ENCODE measurements at regions of chr7 and their contacts with region 1.

Region 1: DNA sequence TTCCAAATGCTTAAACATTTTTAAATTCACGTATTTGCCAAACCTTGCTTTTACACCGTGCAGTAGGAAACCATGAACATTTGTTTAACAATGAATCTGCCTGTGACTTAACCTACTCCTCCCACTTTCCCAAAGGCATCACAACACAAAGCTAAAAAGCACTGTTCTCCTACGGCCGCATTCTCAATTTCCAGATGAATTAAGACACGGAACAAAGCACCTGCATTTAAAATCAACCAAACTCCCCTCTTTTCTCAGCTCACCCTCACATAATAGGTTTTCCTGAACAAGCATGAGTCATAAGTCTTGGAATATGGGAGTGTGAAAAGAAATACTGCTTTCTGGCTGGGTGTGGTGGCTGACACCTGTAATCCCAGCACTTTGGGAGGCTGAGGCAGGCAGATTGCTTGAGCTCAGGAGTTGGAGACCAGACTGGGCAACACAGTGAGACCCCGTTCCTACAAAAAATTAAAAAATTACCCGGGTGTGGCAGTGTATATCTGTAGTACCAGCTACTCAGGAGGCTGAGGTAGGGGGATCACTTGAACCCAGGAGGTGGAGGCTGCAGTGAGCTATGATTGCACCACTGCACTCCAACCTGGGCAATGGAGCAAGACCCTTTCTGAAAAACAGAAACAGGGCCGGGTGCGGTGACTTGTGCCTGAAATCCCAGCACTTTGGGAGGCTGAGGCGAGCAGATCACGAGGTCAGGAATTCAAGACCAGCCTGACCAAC is 51.7 kb upstream of the CYTH3 start:
- DNase-seq: no peak
- ATAC-seq: no peak
- H3K4me3 ChIP-seq: no peak overlapping the region
- H3K4me3 Mint-ChIP-seq: no peak overlapping the region
- H3K27ac ChIP-seq: no peak overlapping the region
- H3K27ac Mint-ChIP-seq: no peak overlapping the region
- H3K4me1 ChIP-seq: no peaks in the 10 kb centered on the region
- H3K4me1 Mint-ChIP-seq: peaks cover 4% of the 10 kb centered on the region
- H3K27me3 ChIP-seq: no peaks in the 10 kb centered on the region
- H3K27me3 Mint-ChIP-seq: peaks cover 3% of the 10 kb centered on the region
- CTCF ChIP-seq: no peak

Region 2: GRCh38 chr7:5854738-5855137 is 469.4 kb before region 1 on chr7:
- CTCF ChIA-PET with region 1: interaction called, 3 read pairs
- POLR2A ChIA-PET with region 1: no interaction called
- intact Hi-C with region 1: loop called (anchors 1 to 2 kb)
- DNase-seq: no peak
- ATAC-seq: no peak
- H3K4me3 ChIP-seq: no peak overlapping the region
- H3K4me3 Mint-ChIP-seq: no peak overlapping the region
- H3K27ac ChIP-seq: no peak overlapping the region
- H3K27ac Mint-ChIP-seq: no peak overlapping the region
- H3K4me1 ChIP-seq: peaks cover 16% of the 10 kb centered on the region
- H3K4me1 Mint-ChIP-seq: peaks cover 18% of the 10 kb centered on the region
- H3K27me3 ChIP-seq: no peaks in the 10 kb centered on the region
- H3K27me3 Mint-ChIP-seq: no peaks in the 10 kb centered on the region
- CTCF ChIP-seq: no peak

Region 3: GRCh38 chr7:5997222-5997808 is 326.8 kb before region 1 on chr7:
- CTCF ChIA-PET with region 1: interaction called, 54 read pairs
- POLR2A ChIA-PET with region 1: interaction called, 4 read pairs
- intact Hi-C with region 1: loop called (anchors 1 kb)
- DNase-seq: peak; percentile 17 to 80 (median 54)
- ATAC-seq: peak; percentile 76
- H3K4me3 ChIP-seq: no peak overlapping the region
- H3K4me3 Mint-ChIP-seq: no peak overlapping the region
- H3K27ac ChIP-seq: no peak overlapping the region
- H3K27ac Mint-ChIP-seq: no peak overlapping the region
- H3K4me1 ChIP-seq: no peaks in the 10 kb centered on the region
- H3K4me1 Mint-ChIP-seq: no peaks in the 10 kb centered on the region
- H3K27me3 ChIP-seq: no peaks in the 10 kb centered on the region
- H3K27me3 Mint-ChIP-seq: no peaks in the 10 kb centered on the region
- CTCF ChIP-seq: peak; percentile 73

Region 4: GRCh38 chr7:6160191-6160623 is 163.9 kb before region 1 on chr7:
- CTCF ChIA-PET with region 1: interaction called, 8 read pairs
- POLR2A ChIA-PET with region 1: no interaction called
- intact Hi-C with region 1: loop called (anchors 2 to 5 kb)
- DNase-seq: no peak
- ATAC-seq: no peak
- H3K4me3 ChIP-seq: no peak overlapping the region
- H3K4me3 Mint-ChIP-seq: no peak overlapping the region
- H3K27ac ChIP-seq: no peak overlapping the region
- H3K27ac Mint-ChIP-seq: no peak overlapping the region
- H3K4me1 ChIP-seq: no peaks in the 10 kb centered on the region
- H3K4me1 Mint-ChIP-seq: no peaks in the 10 kb centered on the region
- H3K27me3 ChIP-seq: no peaks in the 10 kb centered on the region
- H3K27me3 Mint-ChIP-seq: no peaks in the 10 kb centered on the region
- CTCF ChIP-seq: no peak

Region 5: DNA sequence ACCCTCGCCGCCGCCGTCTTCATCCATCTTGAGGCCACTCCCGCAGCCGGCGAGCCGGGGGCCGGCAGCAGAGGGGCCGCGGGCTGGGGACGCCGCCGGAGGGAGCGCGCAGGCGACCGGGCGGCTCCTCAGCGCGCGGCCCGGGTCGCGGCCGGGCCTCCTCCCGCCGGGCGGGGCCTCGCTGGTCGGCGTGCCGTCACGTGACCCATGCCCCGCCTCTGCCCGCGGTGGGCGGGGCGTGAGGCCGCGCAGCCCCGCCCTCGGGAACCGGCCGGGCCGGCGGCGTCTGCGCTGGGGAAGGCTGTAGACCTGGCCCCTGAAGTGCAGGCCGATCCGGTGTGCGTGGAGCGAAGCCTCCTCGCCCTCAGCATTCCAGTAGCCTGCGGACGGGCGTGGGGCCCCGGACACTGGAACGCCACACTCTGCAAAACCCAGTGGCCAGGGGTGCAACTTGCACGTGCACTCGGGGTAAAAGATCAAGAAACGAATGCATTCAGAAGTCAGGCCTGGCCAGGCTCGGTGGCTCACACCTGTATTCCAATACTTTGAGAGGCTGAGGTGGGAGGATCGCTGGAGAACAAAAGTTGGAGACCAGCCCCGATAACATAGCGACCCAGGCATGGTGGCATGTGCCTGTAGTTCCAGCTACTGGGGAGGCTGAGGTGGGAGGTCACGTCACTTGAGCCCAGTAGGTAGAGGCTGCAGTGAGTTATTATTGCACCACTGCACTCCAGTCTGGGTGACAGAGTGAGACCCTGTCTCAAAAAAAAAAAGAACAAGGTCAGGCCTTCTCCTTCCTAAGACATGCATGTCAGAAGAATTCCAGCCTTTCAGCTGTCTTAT is 51.4 kb before region 1 on chr7 and contains the start of gene CYTH3:
- CTCF ChIA-PET with region 1: interaction called, 3 read pairs
- POLR2A ChIA-PET with region 1: no interaction called
- intact Hi-C with region 1: loop called in 1 of 2 experiments (anchors 5 kb)
- DNase-seq: peak; percentile 49 to 90 (median 72)
- ATAC-seq: peak; percentile 83
- H3K4me3 ChIP-seq: peak within 1 kb of the TSS; percentile 61 to 70
- H3K4me3 Mint-ChIP-seq: peak within 1 kb of the TSS; percentile 91
- H3K27ac ChIP-seq: no peak within 1 kb of the TSS
- H3K27ac Mint-ChIP-seq: peak within 1 kb of the TSS; percentile 57
- H3K4me1 ChIP-seq: peaks cover 6% of the 10 kb centered on the region
- H3K4me1 Mint-ChIP-seq: peaks cover 24% of the 10 kb centered on the region
- H3K27me3 ChIP-seq: peaks cover 0 to 2% of the 10 kb centered on the region in 2 experiments
- H3K27me3 Mint-ChIP-seq: peaks cover 10% of the 10 kb centered on the region
- CTCF ChIP-seq: no peak
- total RNA-seq, gene CYTH3: 12.1 to 14.9 TPM

Region 6: DNA sequence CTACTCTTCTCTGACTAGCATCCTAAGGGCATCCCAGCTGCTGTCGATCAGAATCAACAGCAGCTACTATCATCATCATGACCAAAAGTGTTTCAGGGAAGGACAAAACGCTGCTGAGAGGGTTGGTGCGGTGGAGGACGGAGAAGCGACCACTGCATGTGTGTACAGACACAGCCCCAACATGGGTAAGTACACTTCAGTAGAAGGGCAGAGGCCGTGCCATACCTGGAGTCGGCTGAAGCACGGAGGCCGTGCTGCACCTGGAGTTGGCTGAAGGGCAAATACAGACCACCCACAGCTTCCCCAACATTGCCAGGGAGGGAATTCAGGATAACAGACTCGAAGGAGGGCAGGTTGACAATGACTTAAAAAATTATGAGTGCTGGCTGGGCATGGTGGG is 16.1 kb after region 1 on chr7:
- CTCF ChIA-PET with region 1: interaction called, 20 read pairs
- POLR2A ChIA-PET with region 1: interaction called, 3 read pairs
- intact Hi-C with region 1: no loop called
- DNase-seq: no peak
- ATAC-seq: no peak
- H3K4me3 ChIP-seq: no peak overlapping the region
- H3K4me3 Mint-ChIP-seq: no peak overlapping the region
- H3K27ac ChIP-seq: no peak overlapping the region
- H3K27ac Mint-ChIP-seq: no peak overlapping the region
- H3K4me1 ChIP-seq: peaks cover 9% of the 10 kb centered on the region
- H3K4me1 Mint-ChIP-seq: peaks cover 20% of the 10 kb centered on the region
- H3K27me3 ChIP-seq: no peaks in the 10 kb centered on the region
- H3K27me3 Mint-ChIP-seq: no peaks in the 10 kb centered on the region
- CTCF ChIP-seq: no peak

Region 7: GRCh38 chr7:6367701-6368211 is 43.6 kb after region 1 on chr7:
- CTCF ChIA-PET with region 1: no interaction called
- POLR2A ChIA-PET with region 1: no interaction called
- intact Hi-C with region 1: no loop called
- DNase-seq: no peak
- ATAC-seq: no peak
- H3K4me3 ChIP-seq: no peak overlapping the region
- H3K4me3 Mint-ChIP-seq: no peak overlapping the region
- H3K27ac ChIP-seq: no peak overlapping the region
- H3K27ac Mint-ChIP-seq: no peak overlapping the region
- H3K4me1 ChIP-seq: no peaks in the 10 kb centered on the region
- H3K4me1 Mint-ChIP-seq: no peaks in the 10 kb centered on the region
- H3K27me3 ChIP-seq: no peaks in the 10 kb centered on the region
- H3K27me3 Mint-ChIP-seq: no peaks in the 10 kb centered on the region
- CTCF ChIP-seq: no peak

Region 8: GRCh38 chr7:6435486-6436384 is 111.6 kb after region 1 on chr7:
- CTCF ChIA-PET with region 1: no interaction called
- POLR2A ChIA-PET with region 1: no interaction called
- intact Hi-C with region 1: loop called in 1 of 2 experiments (anchors 2 kb)
- DNase-seq: peak; percentile 79 to 93 (median 87)
- ATAC-seq: peak; percentile 97
- H3K4me3 ChIP-seq: peak overlapping the region; percentile 3 to 50
- H3K4me3 Mint-ChIP-seq: peak overlapping the region; percentile 80
- H3K27ac ChIP-seq: peak overlapping the region; percentile 17 to 31
- H3K27ac Mint-ChIP-seq: peak overlapping the region; percentile 90
- H3K4me1 ChIP-seq: peaks cover 37% of the 10 kb centered on the region
- H3K4me1 Mint-ChIP-seq: peaks cover 43% of the 10 kb centered on the region
- H3K27me3 ChIP-seq: no peaks in the 10 kb centered on the region
- H3K27me3 Mint-ChIP-seq: no peaks in the 10 kb centered on the region
- CTCF ChIP-seq: peak; percentile 95